ENCODE measurements at regions of chr22 and their contacts with region 1.

Region 1: DNA sequence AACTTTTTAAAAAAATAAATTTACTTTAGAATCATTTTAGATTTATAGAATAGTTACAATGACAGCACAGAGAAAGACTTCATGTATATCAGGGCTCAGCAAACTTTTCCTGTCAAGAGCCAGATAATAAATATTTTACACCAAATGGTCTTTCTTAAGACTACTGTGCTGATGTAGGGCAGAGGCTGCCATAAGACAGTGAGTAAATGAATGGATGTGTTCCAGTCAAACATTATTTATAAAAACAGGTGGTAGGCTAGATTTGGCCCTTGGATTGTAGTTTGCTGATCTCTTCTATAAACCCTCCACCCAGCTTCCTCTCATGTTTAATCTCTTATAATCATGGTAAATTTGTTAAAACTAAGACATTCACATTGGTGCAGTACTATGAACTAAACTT is 33.0 kb downstream of the CECR2 start:
- H3K4me3 ChIP-seq: no peak overlapping the region
- H3K27ac ChIP-seq: no peak overlapping the region
- H3K4me1 ChIP-seq: peaks cover 10% of the 10 kb centered on the region
- CTCF ChIP-seq: no peak

Region 2: DNA sequence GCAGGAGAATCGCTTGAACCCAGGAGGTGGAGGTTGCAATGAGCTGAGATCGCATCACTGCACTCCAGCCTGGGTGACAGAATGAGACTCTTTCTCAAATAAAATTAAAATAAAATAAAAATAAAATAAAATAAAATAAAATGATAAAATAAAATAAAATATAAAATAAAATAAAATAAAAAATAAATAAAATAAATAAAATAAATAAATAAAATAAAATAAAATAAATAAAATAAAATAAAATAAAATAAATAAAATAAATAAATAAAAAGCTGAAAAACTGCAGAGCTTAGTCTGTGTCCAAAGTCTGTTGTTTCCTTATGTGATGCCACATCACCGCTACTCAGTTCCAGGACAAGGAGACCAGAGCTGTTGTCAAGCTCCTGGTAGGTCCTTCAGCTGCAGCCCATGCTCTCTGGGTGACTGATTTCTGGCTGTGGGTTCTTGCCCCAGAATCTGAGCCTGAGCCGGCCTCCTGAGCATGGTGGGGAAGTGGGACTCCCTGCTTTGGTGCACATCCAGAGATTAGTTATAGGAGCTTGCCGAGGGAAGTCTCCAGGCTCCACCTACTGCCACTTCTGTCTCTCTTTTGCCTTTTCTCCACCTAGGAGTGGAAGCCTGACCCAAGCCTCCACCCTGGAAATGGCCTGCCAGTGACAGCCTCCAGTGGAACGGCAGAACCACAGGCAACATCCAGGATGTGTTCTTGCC is 151.8 kb before region 1 on chr22:
- CTCF ChIA-PET with region 1: no interaction called
- POLR2A ChIA-PET with region 1: interaction called, 10 read pairs
- H3K4me3 ChIP-seq: no peak overlapping the region
- H3K27ac ChIP-seq: no peak overlapping the region
- H3K4me1 ChIP-seq: no peaks in the 10 kb centered on the region
- CTCF ChIP-seq: no peak

Region 3: GRCh38 chr22:17418890-17419324 is 16.6 kb after region 1 on chr22:
- CTCF ChIA-PET with region 1: no interaction called
- POLR2A ChIA-PET with region 1: no interaction called
- H3K4me3 ChIP-seq: no peak overlapping the region
- H3K27ac ChIP-seq: no peak overlapping the region
- H3K4me1 ChIP-seq: peaks cover 3% of the 10 kb centered on the region
- CTCF ChIP-seq: no peak

Region 4: DNA sequence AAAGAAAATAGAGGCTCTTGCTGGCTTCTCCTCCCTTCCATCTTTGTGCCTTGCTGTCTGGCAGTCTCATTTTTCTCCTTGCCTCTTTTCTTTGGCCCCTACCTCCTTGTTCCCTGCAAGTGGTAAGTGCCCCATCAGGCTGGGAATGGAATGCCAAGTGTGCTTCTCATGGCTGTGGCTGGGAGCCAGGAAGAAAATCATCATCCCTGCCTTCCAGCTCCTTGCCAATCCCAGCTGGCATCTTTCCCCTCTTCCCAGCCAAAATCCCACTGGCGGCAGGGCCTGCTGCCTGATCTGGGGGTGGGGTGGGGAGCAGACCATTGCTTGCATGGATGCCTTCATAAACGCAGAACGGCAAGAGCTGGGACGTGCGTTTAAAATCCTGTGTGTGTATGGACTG is 134.0 kb after region 1 on chr22:
- CTCF ChIA-PET with region 1: no interaction called
- POLR2A ChIA-PET with region 1: no interaction called
- H3K4me3 ChIP-seq: no peak overlapping the region
- H3K27ac ChIP-seq: no peak overlapping the region
- H3K4me1 ChIP-seq: no peaks in the 10 kb centered on the region
- CTCF ChIP-seq: no peak

Measured in HEK293 (cell line).